ENCODE measurements at regions of chr11 and their contacts with region 1.

Region 1: DNA sequence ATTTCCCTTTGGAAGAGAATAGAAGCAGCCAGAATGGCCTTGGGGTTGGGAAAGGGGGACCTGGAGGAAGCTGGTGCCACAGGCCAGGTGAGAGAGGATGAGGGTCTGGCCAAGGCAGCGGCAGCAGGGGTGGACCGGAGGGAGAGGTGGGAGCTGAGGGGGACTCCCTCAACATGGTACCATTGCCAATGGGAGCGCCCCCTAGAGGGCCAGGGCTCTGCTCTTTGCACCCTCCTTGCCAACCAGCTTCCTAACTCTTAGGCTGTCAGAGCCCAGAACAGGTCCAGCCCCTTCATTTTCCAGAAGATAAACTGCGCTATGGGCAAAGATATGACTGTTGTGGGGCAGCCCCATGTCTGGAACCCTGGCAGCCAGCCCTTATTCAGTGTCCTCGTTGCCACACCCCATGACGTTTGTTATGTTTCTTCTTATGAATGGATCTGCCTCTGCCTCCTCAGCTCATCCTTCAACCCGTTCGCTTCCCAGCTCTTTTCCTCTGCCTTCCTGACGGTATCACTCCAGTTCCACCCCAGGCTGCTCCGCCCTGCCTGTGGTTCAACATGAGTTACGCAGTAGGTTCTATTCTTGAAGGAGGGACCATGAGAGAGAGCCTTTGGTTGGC is 185.2 kb downstream of the GRIK4 start:
- DNase-seq: peak; percentile 69
- ATAC-seq: peak; percentile 81
- H3K4me3 Mint-ChIP-seq: no peak overlapping the region
- H3K27ac Mint-ChIP-seq: no peak overlapping the region; the same call in 1 of the 2 replicates
- H3K4me1 Mint-ChIP-seq: peaks cover 5% of the 10 kb centered on the region
- H3K27me3 Mint-ChIP-seq: no peaks in the 10 kb centered on the region
- CTCF ChIP-seq: peak; percentile 33; the same call in 1 of the 2 replicates

Region 2: DNA sequence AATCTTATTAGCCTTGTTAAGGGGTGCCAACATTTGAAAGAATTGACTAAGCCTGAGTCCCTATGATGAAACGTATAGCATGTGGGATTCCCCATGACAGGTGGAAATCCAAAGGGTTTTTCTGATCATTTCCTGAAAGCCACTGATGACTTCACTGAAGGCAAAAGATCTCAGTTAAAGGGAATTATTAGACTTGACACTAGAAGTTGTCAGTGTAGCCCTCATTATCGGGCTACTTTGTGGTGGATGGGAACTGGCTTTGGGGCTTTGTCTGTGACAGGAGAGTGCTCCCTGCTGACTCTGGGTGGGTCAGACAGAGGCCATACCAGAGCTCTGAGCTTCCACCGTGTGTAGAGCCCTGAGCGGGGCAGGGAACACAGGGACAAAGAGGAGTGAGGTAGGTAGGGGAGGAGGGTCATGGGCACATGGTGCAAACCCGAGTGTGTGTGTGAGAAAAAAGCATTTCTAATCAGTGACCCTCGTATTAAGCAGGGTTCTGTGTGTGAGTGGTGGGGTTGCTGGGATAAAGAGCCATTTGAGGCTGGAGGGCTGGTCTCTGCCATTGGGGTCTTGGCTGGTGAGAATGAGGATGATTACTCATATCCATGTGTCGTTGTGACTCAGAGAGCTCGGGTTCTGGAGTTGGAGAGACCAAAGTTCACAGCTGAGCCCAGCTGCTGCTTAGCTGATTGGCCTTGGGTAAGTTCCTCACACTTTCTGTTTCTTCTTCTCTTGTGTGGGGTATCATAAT is 84.0 kb before region 1 on chr11:
- CTCF ChIA-PET with region 1: no interaction called
- POLR2A ChIA-PET with region 1: no interaction called
- DNase-seq: no peak
- ATAC-seq: no peak
- H3K4me3 Mint-ChIP-seq: no peak overlapping the region
- H3K27ac Mint-ChIP-seq: no peak overlapping the region
- H3K4me1 Mint-ChIP-seq: peaks cover 45% of the 10 kb centered on the region
- H3K27me3 Mint-ChIP-seq: no peaks in the 10 kb centered on the region; the same call in none of the 2 replicates
- CTCF ChIP-seq: no peak

Region 3: DNA sequence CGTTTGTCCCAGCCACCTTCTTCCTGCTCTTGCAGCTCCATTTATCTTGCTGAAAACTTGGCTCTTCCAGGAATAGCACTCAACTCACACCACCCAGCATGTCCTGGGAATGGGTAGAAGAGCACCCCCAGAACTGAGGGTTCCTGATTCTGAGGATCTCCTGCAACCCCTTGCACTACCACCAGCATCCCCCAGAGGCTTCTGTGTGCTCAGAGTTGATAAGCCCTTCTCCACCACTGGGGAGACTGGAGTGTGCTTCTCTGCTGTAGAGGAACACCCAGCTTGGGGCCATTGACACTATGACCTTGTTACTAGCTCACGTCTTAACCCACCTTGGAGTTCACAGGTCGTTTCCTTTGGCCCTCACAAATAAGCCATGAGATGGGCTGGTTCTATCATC is 64.1 kb before region 1 on chr11:
- CTCF ChIA-PET with region 1: interaction called, 10 read pairs
- POLR2A ChIA-PET with region 1: no interaction called
- DNase-seq: no peak
- ATAC-seq: peak; percentile 74
- H3K4me3 Mint-ChIP-seq: no peak overlapping the region
- H3K27ac Mint-ChIP-seq: no peak overlapping the region
- H3K4me1 Mint-ChIP-seq: peaks cover 34% of the 10 kb centered on the region
- H3K27me3 Mint-ChIP-seq: peaks cover 14% of the 10 kb centered on the region
- CTCF ChIP-seq: 0 out of 2 replicates have a peak, but pooled peaks have one; percentile 23

Region 4: DNA sequence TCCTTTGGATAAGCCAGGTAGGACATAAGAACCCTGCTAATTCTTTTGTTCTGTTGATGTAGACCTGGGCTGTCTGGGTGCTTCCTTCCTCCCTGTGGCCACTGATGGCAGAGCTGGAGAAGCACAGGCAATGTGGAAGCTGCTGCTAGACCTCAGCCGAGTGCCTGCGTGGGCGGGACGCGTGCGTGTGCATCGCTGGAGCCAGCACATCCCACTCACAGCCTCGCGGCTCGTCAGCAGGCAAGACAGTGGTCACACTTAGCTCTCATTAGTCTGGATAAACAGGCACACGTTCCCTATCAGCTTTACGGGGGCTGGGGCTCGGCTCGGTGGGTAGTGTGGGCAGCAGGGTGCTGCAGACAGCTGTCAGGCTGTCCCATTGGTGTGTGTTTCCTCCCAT is 29.4 kb before region 1 on chr11:
- CTCF ChIA-PET with region 1: interaction called, 19 read pairs
- POLR2A ChIA-PET with region 1: no interaction called
- DNase-seq: no peak
- ATAC-seq: peak; percentile 32
- H3K4me3 Mint-ChIP-seq: no peak overlapping the region
- H3K27ac Mint-ChIP-seq: no peak overlapping the region
- H3K4me1 Mint-ChIP-seq: peaks cover 15% of the 10 kb centered on the region
- H3K27me3 Mint-ChIP-seq: no peaks in the 10 kb centered on the region; the same call in 1 of the 2 replicates
- CTCF ChIP-seq: no peak

Region 5: GRCh38 chr11:120719348-120719747 is 22.6 kb after region 1 on chr11:
- CTCF ChIA-PET with region 1: interaction called, 34 read pairs
- POLR2A ChIA-PET with region 1: no interaction called
- DNase-seq: no peak
- ATAC-seq: no peak
- H3K4me3 Mint-ChIP-seq: no peak overlapping the region
- H3K27ac Mint-ChIP-seq: no peak overlapping the region
- H3K4me1 Mint-ChIP-seq: peaks cover 47% of the 10 kb centered on the region
- H3K27me3 Mint-ChIP-seq: no peaks in the 10 kb centered on the region; the same call in 1 of the 2 replicates
- CTCF ChIP-seq: no peak

Region 6: GRCh38 chr11:120801801-120802689 is 105.3 kb after region 1 on chr11:
- CTCF ChIA-PET with region 1: interaction called, 16 read pairs
- POLR2A ChIA-PET with region 1: no interaction called
- DNase-seq: peak; percentile 83
- ATAC-seq: peak; percentile 83
- H3K4me3 Mint-ChIP-seq: no peak overlapping the region
- H3K27ac Mint-ChIP-seq: no peak overlapping the region
- H3K4me1 Mint-ChIP-seq: peaks cover 22% of the 10 kb centered on the region
- H3K27me3 Mint-ChIP-seq: no peaks in the 10 kb centered on the region; the same call in 1 of the 2 replicates
- CTCF ChIP-seq: peak; percentile 97

Region 7: DNA sequence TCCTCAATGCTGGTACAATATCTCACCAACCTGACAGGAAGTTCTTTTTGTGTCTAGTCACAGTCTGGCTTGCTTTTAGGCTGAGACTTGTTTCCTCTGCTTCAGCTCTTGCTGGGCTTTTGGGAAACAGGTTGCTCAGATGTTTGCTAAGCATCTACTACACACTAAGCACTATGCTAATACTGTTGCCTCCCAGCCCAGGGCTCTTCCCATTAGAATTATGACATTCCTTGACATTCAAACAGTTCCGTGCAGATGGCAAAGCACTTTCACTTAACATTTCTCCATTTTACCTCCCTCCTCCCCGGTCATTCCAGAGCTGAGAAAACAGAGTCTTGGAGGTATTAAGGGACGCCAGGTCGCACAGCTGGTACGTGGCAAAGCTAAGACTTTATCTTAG is 126.5 kb after region 1 on chr11:
- CTCF ChIA-PET with region 1: no interaction called
- POLR2A ChIA-PET with region 1: no interaction called
- DNase-seq: no peak
- ATAC-seq: no peak
- H3K4me3 Mint-ChIP-seq: no peak overlapping the region
- H3K27ac Mint-ChIP-seq: no peak overlapping the region
- H3K4me1 Mint-ChIP-seq: peaks cover 8% of the 10 kb centered on the region; the same call in 1 of the 2 replicates
- H3K27me3 Mint-ChIP-seq: no peaks in the 10 kb centered on the region; the same call in 1 of the 2 replicates
- CTCF ChIP-seq: no peak

Region 8: GRCh38 chr11:121004206-121004840 is 307.6 kb after region 1 on chr11:
- CTCF ChIA-PET with region 1: no interaction called
- POLR2A ChIA-PET with region 1: no interaction called
- DNase-seq: no peak
- ATAC-seq: peak; percentile 64
- H3K4me3 Mint-ChIP-seq: no peak overlapping the region
- H3K27ac Mint-ChIP-seq: no peak overlapping the region
- H3K4me1 Mint-ChIP-seq: peaks cover 11% of the 10 kb centered on the region
- H3K27me3 Mint-ChIP-seq: no peaks in the 10 kb centered on the region; the same call in 1 of the 2 replicates
- CTCF ChIP-seq: no peak

Region 9: GRCh38 chr11:121048464-121049233 is 351.9 kb after region 1 on chr11:
- CTCF ChIA-PET with region 1: no interaction called
- POLR2A ChIA-PET with region 1: no interaction called
- DNase-seq: no peak
- ATAC-seq: no peak
- H3K4me3 Mint-ChIP-seq: no peak overlapping the region
- H3K27ac Mint-ChIP-seq: 0 out of 2 replicates have a peak overlapping the region, but pooled peaks have one; percentile 11
- H3K4me1 Mint-ChIP-seq: peaks cover 6% of the 10 kb centered on the region
- H3K27me3 Mint-ChIP-seq: no peaks in the 10 kb centered on the region
- CTCF ChIP-seq: no peak